B cell (primary cell): ENCODE measurements at regions of chr16 and their contacts with region 1.

Region 1: GRCh38 chr16:14285513-14286385 is 214.6 kb downstream of the MRTFB start:
- DNase-seq: peak; percentile 97
- ATAC-seq: peak; percentile 81
- H3K4me3 ChIP-seq: peak overlapping the region; percentile 77 to 98 (median 86)
- H3K4me3 Mint-ChIP-seq: peak overlapping the region; percentile 94
- H3K27ac ChIP-seq: peak overlapping the region; percentile 47 to 62
- H3K27ac Mint-ChIP-seq: peak overlapping the region; percentile 96
- H3K4me1 ChIP-seq: peaks cover 16 to 20% of the 10 kb centered on the region in 2 donors
- H3K4me1 Mint-ChIP-seq: peaks cover 21% of the 10 kb centered on the region
- H3K27me3 ChIP-seq: no peaks in the 10 kb centered on the region
- H3K27me3 Mint-ChIP-seq: no peaks in the 10 kb centered on the region
- CTCF ChIP-seq: no peak

Region 2: GRCh38 chr16:13919683-13920509 is 365.9 kb before region 1 on chr16 and contains the start of gene ERCC4:
- CTCF ChIA-PET with region 1: interaction called, 24 read pairs
- POLR2A ChIA-PET with region 1: no interaction called
- intact Hi-C with region 1: loop called (anchors 1 kb)
- DNase-seq: peak; percentile 100
- ATAC-seq: peak; percentile 96
- H3K4me3 ChIP-seq: peak within 1 kb of the TSS; percentile 64 to 89 (median 79)
- H3K4me3 Mint-ChIP-seq: peak within 1 kb of the TSS; percentile 94
- H3K27ac ChIP-seq: peak within 1 kb of the TSS; percentile 12 to 85
- H3K27ac Mint-ChIP-seq: peak within 1 kb of the TSS; percentile 79
- H3K4me1 ChIP-seq: peaks cover 12 to 15% of the 10 kb centered on the region in 2 donors
- H3K4me1 Mint-ChIP-seq: peaks cover 24% of the 10 kb centered on the region
- H3K27me3 ChIP-seq: no peaks in the 10 kb centered on the region
- H3K27me3 Mint-ChIP-seq: no peaks in the 10 kb centered on the region
- CTCF ChIP-seq: peak; percentile 91
- total RNA-seq, gene ERCC4: 11.9 and 13.2 TPM in 2 replicates

Region 3: GRCh38 chr16:14249291-14250032 is 36.3 kb before region 1 on chr16:
- CTCF ChIA-PET with region 1: interaction called, 9 read pairs
- POLR2A ChIA-PET with region 1: no interaction called
- intact Hi-C with region 1: loop called (anchors 1 kb)
- DNase-seq: peak; percentile 66
- ATAC-seq: no peak
- H3K4me3 ChIP-seq: no peak overlapping the region
- H3K4me3 Mint-ChIP-seq: no peak overlapping the region
- H3K27ac ChIP-seq: no peak overlapping the region
- H3K27ac Mint-ChIP-seq: no peak overlapping the region
- H3K4me1 ChIP-seq: no peaks in the 10 kb centered on the region
- H3K4me1 Mint-ChIP-seq: no peaks in the 10 kb centered on the region
- H3K27me3 ChIP-seq: no peaks in the 10 kb centered on the region
- H3K27me3 Mint-ChIP-seq: no peaks in the 10 kb centered on the region
- CTCF ChIP-seq: peak; percentile 95

Region 4: GRCh38 chr16:14310519-14310991 is 24.8 kb after region 1 on chr16:
- CTCF ChIA-PET with region 1: interaction called, 11 read pairs
- POLR2A ChIA-PET with region 1: interaction called, 8 read pairs
- intact Hi-C with region 1: no loop called
- DNase-seq: peak; percentile 28
- ATAC-seq: peak; percentile 62
- H3K4me3 ChIP-seq: no peak overlapping the region
- H3K4me3 Mint-ChIP-seq: peak overlapping the region; percentile 54
- H3K27ac ChIP-seq: no peak overlapping the region
- H3K27ac Mint-ChIP-seq: no peak overlapping the region
- H3K4me1 ChIP-seq: peaks cover 22 to 27% of the 10 kb centered on the region in 2 donors
- H3K4me1 Mint-ChIP-seq: peaks cover 23% of the 10 kb centered on the region
- H3K27me3 ChIP-seq: peaks cover 0 to 5% (median 0%) of the 10 kb centered on the region in 4 experiments
- H3K27me3 Mint-ChIP-seq: peaks cover 4% of the 10 kb centered on the region
- CTCF ChIP-seq: no peak

Region 5: DNA sequence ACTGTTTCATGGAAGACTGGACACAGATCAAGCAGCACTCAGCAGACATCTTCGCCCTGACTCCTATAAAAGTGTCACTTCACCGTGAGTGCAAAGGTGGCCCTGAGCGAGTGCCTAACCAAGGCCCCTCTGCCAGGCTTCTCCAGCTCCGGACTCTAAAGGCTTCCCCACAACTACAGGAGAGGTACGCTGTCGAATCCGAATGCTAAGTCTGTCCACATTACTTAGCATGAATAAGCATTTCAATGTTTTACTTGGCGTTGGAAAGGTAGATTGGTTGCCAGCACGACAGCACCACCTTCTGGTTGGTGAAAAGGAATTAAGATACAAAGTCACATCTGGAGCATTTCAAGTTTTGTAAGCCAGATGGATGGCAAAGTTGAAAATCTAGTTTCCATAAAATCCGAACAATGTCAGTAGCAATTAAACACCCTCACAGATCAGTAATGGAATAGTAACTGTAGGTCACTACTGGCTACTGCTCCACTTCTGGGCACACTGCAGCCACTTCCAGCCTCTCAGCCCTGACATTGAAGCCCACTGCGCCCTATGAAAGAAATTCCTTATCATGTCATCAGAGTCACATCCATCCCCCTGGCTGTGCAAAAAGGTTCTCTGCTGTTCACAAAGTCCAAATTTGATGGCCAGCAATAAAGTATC is 243.4 kb after region 1 on chr16:
- CTCF ChIA-PET with region 1: interaction called, 10 read pairs
- POLR2A ChIA-PET with region 1: no interaction called
- intact Hi-C with region 1: loop called (anchors 5 kb)
- DNase-seq: peak; percentile 66
- ATAC-seq: no peak
- H3K4me3 ChIP-seq: no peak overlapping the region
- H3K4me3 Mint-ChIP-seq: no peak overlapping the region
- H3K27ac ChIP-seq: no peak overlapping the region
- H3K27ac Mint-ChIP-seq: peak overlapping the region; percentile 12
- H3K4me1 ChIP-seq: peaks cover 0 to 2% of the 10 kb centered on the region in 2 donors
- H3K4me1 Mint-ChIP-seq: peaks cover 6% of the 10 kb centered on the region
- H3K27me3 ChIP-seq: no peaks in the 10 kb centered on the region
- H3K27me3 Mint-ChIP-seq: no peaks in the 10 kb centered on the region
- CTCF ChIP-seq: peak; percentile 81